Left colon (tissue), 2 donors: ENCODE measurements at regions of chr5 and their contacts with region 1.

Region 1: GRCh38 chr5:849651-850301 is 1.0 kb downstream of the ZDHHC11 start:
- DNase-seq: peak in 1 of 2 donors; percentile 44
- ATAC-seq: peak; percentile 55

Region 2: DNA sequence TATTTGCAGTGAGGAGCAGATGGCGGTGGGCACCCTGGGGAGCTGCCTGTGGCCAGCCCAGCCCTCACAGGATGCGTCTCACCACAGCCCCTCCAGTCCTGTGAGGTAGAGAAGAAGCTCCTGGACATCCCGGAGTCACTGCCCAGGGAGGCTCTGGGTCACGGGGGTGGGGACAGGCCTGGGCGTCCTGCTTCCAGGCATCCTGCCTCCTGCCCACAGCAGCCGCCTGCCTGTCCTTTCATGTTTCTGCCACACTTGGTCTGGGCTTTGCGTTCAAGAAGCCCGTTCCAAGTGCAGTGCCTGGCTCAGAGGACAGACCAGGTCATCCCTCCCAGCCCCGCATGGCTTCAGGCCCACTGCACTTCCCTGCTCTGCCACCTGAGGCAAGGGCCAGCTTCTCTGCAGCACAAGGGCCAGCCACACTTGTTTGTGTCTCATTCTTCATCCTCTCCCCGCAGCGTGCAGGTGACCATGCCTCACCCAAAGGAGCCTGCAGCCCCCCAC is 103.5 kb before region 1 on chr5:
- intact Hi-C with region 1: loop called in 1 of 2 experiments (anchors 5 kb)
- DNase-seq: peak in 1 of 2 donors; percentile 24
- ATAC-seq: no peak